Aorta (tissue), 5 donors: ENCODE measurements at regions of chr19 and their contacts with region 1.

Region 1: GRCh38 chr19:49881672-49882394 is 4.3 kb downstream of the TBC1D17 start:
- DNase-seq: no peak
- ATAC-seq: no peak
- H3K4me3 ChIP-seq: no peak overlapping the region
- H3K27ac ChIP-seq: no peak overlapping the region
- H3K4me1 ChIP-seq: no peaks in the 10 kb centered on the region
- H3K27me3 ChIP-seq: no peaks in the 10 kb centered on the region

Region 2: DNA sequence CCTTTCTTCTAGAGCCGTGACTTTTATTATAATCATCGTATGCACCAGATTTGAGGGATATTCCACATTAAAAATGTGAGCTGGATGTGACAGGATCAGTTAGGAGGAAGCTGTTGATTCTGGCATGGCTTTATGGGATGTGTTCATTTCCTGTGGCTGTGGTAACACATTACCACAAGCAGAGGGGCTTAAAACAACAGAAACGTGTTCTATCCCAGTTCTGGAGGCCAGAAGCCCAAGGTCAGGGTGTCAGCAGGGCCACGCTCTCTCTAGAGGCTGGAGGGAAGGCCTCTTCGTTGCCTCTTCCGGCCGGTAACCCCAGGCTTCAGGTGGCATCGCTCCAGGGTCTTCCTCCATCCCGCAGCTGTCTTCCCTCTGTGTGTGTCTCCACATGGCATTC is 49.3 kb before region 1 on chr19:
- intact Hi-C with region 1: no loop called
- DNase-seq: no peak
- ATAC-seq: no peak
- H3K4me3 ChIP-seq: no peak overlapping the region
- H3K27ac ChIP-seq: no peak overlapping the region
- H3K4me1 ChIP-seq: no peaks in the 10 kb centered on the region
- H3K27me3 ChIP-seq: no peaks in the 10 kb centered on the region

Region 3: DNA sequence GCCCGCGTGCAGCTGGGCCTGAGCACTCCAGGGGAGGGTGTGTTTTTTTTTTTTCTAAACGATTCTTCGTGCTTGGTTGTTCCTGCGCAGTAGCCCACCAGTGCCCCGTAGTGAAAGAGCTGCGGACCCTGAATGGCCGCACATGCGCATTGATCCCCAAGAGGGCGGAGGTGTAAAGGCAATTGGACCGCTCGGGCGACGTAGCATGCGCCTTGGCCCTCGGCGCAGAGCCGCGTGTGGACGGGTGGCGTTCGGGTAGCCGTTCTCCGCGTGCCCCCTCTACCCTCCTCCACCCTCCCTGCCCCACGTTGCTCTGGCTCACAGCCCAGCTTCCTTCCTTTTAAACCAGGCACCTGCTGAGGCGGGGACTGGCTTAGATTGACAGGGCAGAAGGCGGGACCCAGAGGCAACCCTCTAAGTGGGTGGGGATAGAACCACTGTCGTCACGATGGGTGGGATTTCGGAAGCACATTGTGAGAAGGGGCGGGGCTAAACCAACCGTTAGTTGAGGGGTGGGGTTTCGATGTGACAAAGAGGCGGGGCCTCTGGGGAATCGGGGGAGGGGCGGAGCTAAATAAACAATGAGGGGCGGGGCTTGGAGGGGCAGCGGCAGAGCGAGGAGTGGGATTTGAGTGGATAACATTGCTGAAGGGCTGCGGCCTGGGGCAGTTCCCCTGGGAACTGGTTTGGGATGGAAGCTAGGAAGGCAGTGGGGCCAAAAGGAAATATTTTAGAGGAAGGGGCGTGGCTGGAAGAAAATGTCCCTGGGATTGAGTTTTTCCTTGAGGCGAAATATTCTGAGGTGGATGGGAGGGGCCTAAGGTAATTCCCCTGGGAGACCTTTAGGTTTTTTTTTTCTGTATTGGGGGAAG is 48.0 kb after region 1 on chr19:
- intact Hi-C with region 1: loop called in 1 of 2 experiments (anchors 5 kb)
- DNase-seq: peak; percentile 96
- ATAC-seq: peak; percentile 94
- H3K4me3 ChIP-seq: peak overlapping the region; percentile 51 to 73
- H3K27ac ChIP-seq: peak overlapping the region in 1 of 2 donors; percentile 34
- H3K4me1 ChIP-seq: no peaks in the 10 kb centered on the region
- H3K27me3 ChIP-seq: no peaks in the 10 kb centered on the region